Heart left ventricle (tissue), 16 donors: ENCODE measurements at regions of chr16 and their contacts with region 1.

Region 1: DNA sequence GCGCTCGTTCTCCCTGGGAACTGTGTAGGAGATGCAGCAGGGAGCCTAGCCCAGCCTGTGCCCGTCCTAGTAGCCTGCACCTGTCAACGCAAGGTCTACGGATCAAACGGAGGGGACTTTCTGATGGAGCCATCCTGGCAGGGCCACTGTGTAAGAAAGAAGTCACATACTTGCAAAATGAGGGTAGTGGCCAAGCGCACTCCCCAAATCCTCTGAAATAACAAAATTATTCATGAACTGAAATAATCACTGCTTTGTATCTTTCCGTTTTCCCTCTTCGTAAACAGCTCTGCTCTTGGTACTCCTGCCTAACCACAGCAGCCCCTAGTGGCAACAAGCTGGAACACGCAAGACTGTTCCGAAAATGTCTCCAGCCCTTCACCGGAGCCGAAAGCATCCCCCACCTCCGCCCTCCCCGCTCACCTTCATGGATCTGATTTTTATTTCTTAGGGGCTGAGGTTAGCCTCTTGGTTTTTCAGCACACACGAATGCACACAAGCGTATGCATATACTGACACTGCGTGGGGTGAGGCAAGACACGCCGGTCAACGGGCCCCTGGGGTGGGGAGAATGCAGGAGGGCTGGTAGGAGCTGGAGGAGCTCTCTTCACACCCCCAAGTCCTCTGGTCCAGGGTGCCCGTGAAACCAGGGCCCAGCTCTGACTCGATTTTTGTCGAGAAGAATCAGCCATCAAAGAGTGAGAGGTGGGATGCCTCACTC is 100.8 kb downstream of the ABCC12 start:
- DNase-seq: peak in 4 of 5 donors; percentile 28 to 40 (median 34)
- ATAC-seq: peak in 3 of 4 donors; percentile 64 to 85 (median 68)
- H3K4me3 ChIP-seq: peak overlapping the region in 3 of 12 donors; percentile 9 to 23 (median 15)
- H3K27ac ChIP-seq: no peak overlapping the region
- H3K4me1 ChIP-seq: peaks cover 0 to 23% (median 4%) of the 10 kb centered on the region in 12 donors
- H3K27me3 ChIP-seq: peaks cover 0 to 3% (median 0%) of the 10 kb centered on the region in 9 donors
- CTCF ChIP-seq: peak; percentile 65 to 82 (median 78)
- POLR2A ChIP-seq: no peak

Region 2: GRCh38 chr16:47037746-47038458 is 1017.1 kb before region 1 on chr16:
- intact Hi-C with region 1: loop called in 3 of 10 experiments (anchors 10 kb)
- DNase-seq: peak; percentile 89 to 95 (median 90)
- ATAC-seq: peak; percentile 85 to 99 (median 98)
- H3K4me3 ChIP-seq: peak overlapping the region; percentile 60 to 78 (median 66)
- H3K27ac ChIP-seq: peak overlapping the region in 6 of 12 donors; percentile 29 to 68 (median 50)
- H3K4me1 ChIP-seq: peaks cover 0 to 12% (median 3%) of the 10 kb centered on the region in 12 donors
- H3K27me3 ChIP-seq: no peaks in the 10 kb centered on the region
- CTCF ChIP-seq: peak; percentile 87 to 98 (median 94)
- POLR2A ChIP-seq: no peak

Region 3: DNA sequence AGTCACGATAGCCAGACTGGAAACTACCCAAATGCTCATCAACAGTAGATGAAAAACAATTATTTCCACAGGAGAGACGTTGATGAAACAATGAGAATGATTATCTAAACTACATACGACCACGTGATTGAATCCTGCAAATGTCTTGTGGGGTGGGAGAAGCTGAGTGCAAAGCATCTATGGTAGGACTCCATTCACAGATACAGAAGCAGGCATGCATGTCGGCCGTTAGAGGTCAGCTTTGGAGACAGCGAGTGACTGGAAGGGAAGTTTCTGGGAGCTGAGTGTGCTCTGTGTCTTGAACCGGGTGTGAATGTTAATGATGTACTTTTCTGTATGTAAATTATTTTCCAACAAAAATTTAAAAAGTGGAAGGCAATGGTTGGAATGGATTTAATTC is 1010.0 kb before region 1 on chr16:
- intact Hi-C with region 1: loop called in 1 of 10 experiments (anchors 10 kb)
- DNase-seq: no peak
- ATAC-seq: no peak
- H3K4me3 ChIP-seq: no peak overlapping the region
- H3K27ac ChIP-seq: no peak overlapping the region
- H3K4me1 ChIP-seq: peaks cover 0 to 5% (median 0%) of the 10 kb centered on the region in 12 donors
- H3K27me3 ChIP-seq: no peaks in the 10 kb centered on the region
- CTCF ChIP-seq: peak in 1 of 12 donors; percentile 16
- POLR2A ChIP-seq: no peak

Region 4: DNA sequence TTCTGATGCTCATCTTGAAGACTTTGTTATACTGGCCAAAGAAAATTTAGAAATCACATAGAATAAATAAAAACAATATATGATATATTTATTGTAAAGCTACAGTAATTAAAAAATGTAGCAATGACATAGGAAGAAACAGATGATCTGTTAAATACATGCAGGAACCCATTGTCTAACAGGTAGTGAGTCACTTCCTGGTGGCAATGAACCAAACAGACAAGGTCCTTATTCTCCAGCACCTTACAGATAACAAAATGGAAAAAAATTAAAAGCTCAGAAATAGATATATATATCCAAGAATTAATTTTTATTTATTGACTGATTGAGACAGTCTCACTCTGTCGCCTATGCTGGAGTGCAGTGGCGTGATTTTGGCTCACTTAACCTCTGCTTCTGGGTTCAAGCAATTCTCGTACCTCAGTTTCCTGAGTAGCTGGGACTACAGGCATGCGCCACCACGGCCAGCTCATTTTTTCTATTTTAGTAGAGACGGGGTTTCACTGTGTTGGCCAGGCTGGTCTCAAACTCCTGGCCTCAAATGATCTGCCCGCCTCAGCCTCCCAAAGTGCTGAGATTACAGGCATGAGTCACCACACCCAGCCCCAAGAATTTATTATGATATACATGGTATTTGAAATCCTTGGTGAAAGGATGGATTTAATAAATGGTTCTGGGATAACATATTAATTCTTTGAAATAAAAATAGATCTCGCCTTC is 918.8 kb before region 1 on chr16:
- intact Hi-C with region 1: loop called in 8 of 10 experiments (anchors 5 to 10 kb)
- DNase-seq: peak in 1 of 5 donors; percentile 23
- ATAC-seq: peak in 1 of 4 donors; percentile 65
- H3K4me3 ChIP-seq: peak overlapping the region in 1 of 12 donors; percentile 17
- H3K27ac ChIP-seq: peak overlapping the region in 5 of 12 donors; percentile 18 to 51 (median 41)
- H3K4me1 ChIP-seq: peaks cover 0 to 12% (median 0%) of the 10 kb centered on the region in 12 donors
- H3K27me3 ChIP-seq: no peaks in the 10 kb centered on the region
- CTCF ChIP-seq: no peak
- POLR2A ChIP-seq: no peak

Region 5: GRCh38 chr16:47258874-47259461 is 796.1 kb before region 1 on chr16:
- intact Hi-C with region 1: loop called in 1 of 10 experiments (anchors 10 kb)
- DNase-seq: no peak
- ATAC-seq: no peak
- H3K4me3 ChIP-seq: no peak overlapping the region
- H3K27ac ChIP-seq: no peak overlapping the region
- H3K4me1 ChIP-seq: no peaks in the 10 kb centered on the region
- H3K27me3 ChIP-seq: no peaks in the 10 kb centered on the region
- CTCF ChIP-seq: peak; percentile 40 to 69 (median 52)
- POLR2A ChIP-seq: no peak

Region 6: DNA sequence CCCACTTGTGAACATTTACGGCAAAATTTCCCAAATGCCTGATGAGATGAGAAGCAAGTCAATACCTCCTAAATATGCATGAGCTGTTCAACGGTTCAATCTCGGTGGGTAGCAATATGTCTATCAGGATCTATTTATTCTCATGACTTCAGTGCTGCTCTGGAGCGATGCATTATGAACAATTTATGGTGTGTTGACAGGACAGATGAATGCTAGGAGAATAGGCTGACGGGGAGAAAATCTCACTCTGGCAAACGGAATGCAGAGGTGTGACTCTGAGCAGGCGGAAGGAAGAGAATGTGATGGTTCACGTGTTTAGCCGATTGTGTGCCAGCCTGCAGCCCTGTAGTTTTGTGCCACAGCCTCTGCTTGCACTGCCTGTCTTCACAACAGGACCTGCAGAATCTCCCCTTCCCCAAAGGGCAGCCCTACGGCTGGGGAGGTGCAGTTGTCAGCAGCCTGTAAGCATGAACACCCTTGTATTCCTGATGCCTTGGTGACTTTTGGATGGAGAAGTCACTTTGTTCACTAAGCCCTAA is 248.7 kb before region 1 on chr16:
- intact Hi-C with region 1: no loop called
- DNase-seq: no peak
- ATAC-seq: no peak
- H3K4me3 ChIP-seq: no peak overlapping the region
- H3K27ac ChIP-seq: no peak overlapping the region
- H3K4me1 ChIP-seq: no peaks in the 10 kb centered on the region
- H3K27me3 ChIP-seq: no peaks in the 10 kb centered on the region
- CTCF ChIP-seq: no peak
- POLR2A ChIP-seq: no peak